ENCODE measurements at regions of chr3 and their contacts with region 1.

Region 1: GRCh38 chr3:98778852-98779413 is 15.8 kb downstream of the ST3GAL6 start:
- DNase-seq: no peak
- ATAC-seq: peak; percentile 80 to 83

Region 2: DNA sequence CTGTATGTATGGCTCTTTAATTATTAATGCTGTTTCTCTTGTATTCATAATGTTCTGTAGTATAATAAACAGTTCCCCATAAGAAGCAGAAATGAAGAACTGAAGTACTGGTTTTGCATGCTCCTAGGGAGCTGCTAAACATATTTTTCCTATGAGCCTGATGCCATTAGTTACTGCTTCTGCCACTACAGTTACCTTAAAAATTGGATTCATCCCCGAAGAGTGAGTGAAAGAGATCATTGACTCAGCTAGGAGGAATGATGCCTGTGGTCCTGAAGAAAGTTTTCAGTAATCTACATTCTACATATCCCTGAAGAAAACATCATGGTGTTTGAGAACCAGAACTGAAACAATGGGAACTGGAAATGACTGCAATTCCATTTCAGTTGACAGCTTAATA is 52.8 kb before region 1 on chr3:
- intact Hi-C with region 1: loop called (anchors 10 kb)
- DNase-seq: no peak
- ATAC-seq: no peak

Region 3: GRCh38 chr3:98855806-98856400 is 77.0 kb after region 1 on chr3:
- intact Hi-C with region 1: no loop called
- DNase-seq: peak; percentile 27
- ATAC-seq: peak; percentile 47 to 96

Measured in left cardiac atrium (tissue), 4 donors.